ENCODE measurements at regions of chr5 and their contacts with region 1.

Region 1: GRCh38 chr5:76652809-76653414 is 29.7 kb upstream of the F2RL2 start:
- DNase-seq: no peak
- H3K4me3 ChIP-seq: no peak overlapping the region
- H3K27ac ChIP-seq: no peak overlapping the region
- H3K27me3 ChIP-seq: no peaks in the 10 kb centered on the region
- CTCF ChIP-seq: no peak

Region 2: DNA sequence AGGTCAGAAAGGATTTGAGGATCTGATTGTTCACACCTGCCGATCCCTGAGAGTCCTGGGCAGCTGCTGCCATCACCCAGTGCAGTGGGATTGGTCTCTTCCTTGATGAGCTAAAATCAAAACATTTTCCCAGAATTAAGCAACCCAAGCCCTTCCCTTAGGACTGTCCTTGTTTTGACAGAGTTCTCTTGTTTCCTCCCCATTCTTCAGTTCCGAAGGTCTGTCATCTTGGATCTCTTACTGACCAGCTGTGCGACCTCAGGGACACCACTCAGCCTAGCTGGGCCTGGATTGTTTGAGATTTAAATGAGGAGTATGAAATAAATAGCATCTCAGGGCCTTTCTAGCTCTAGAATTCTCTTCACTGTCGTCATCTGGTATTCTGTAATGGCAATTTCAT is 340.1 kb before region 1 on chr5:
- CTCF ChIA-PET with region 1: interaction called, 10 read pairs
- POLR2A ChIA-PET with region 1: no interaction called
- DNase-seq: no peak
- H3K4me3 ChIP-seq: no peak overlapping the region
- H3K27ac ChIP-seq: no peak overlapping the region
- H3K27me3 ChIP-seq: no peaks in the 10 kb centered on the region
- CTCF ChIP-seq: no peak

Region 3: GRCh38 chr5:76679231-76679630 is 26.3 kb after region 1 on chr5:
- CTCF ChIA-PET with region 1: no interaction called
- POLR2A ChIA-PET with region 1: no interaction called
- DNase-seq: no peak
- H3K4me3 ChIP-seq: no peak overlapping the region
- H3K27ac ChIP-seq: no peak overlapping the region
- H3K27me3 ChIP-seq: no peaks in the 10 kb centered on the region
- CTCF ChIP-seq: no peak

Region 4: GRCh38 chr5:77367733-77368132 is 714.8 kb after region 1 on chr5:
- CTCF ChIA-PET with region 1: no interaction called
- POLR2A ChIA-PET with region 1: no interaction called
- DNase-seq: no peak
- H3K4me3 ChIP-seq: no peak overlapping the region
- H3K27ac ChIP-seq: no peak overlapping the region
- H3K27me3 ChIP-seq: no peaks in the 10 kb centered on the region
- CTCF ChIP-seq: no peak